GM10248 (cell line): ENCODE measurements at regions of chr7 and their contacts with region 1.

Region 1: GRCh38 chr7:139075031-139075652 is 34.4 kb downstream of the ZC3HAV1 start:
- DNase-seq: peak; percentile 76
- CTCF ChIP-seq: peak; percentile 70

Region 2: DNA sequence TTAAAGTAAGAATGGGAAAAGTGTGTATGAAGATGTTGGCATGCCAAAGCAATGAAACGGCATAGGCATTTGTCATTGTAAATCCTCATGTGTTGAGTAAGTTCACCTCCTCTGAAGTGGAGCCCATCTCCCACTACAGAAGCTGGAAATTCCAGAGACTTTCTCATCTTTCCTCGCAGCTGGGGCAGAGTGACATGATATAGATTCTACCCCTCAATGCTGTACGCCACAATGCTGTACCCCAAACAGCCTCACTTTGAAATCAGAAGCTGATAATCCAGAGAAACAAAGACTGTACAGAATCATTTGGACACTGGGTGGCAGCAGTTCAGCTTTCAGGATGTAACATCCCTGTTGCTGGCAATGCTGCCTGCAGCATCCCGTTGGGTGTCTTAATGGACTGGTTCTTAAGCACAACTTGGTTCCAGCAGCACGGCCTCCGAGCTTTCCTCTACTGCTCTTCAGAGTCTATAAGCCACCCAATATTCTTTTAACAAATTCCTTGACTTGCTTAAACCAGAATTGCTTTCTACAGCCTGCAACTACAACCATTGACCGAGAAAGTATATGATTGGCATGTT is 58.1 kb before region 1 on chr7:
- CTCF ChIA-PET with region 1: interaction called, 44 read pairs
- POLR2A ChIA-PET with region 1: no interaction called
- DNase-seq: peak; percentile 81
- CTCF ChIP-seq: peak; percentile 62

Region 3: DNA sequence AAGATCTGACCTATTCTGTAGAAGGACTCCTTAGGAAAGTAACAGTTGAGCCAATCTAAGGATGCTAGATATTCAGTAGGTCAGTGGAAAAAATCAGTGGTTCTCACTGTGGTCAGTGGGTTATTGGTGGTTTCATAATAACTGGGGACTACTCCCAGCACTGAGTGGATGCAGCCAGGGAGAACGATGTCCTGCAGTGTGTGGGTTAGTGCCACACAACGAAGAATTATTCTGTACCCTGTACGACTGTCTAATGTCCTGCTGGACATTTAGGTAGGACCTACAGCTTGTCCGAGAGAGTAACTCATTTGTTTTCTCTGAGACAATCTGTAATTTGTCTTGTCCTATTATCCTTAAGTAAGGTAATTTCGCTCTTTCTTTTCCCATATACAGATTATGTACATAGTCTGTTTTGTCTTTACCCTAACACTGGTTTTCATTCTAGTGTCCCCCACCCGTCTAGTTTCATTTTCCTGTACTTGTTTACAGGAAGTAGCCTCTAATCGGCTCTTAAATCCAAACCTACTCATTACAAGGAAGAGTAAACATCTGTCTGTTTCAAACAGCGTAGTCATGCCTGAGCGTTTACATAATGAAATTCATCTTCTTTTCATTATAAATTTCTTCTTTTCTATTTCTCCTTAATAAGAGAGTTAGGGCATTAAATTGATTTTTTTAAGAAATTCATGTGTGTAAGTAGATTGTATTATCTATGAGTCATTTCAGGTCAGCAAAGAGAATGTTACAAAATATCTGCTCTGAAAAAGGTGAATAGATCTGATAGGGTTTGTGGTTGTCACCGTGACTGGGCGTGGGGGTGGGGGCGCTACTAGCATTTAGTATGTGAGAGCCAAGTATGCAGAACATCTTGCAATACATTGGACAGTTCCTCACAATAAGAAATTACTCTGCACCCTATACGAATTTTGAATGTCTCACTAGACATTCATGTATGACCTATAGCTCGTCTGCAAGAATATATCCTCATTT is 31.0 kb before region 1 on chr7:
- CTCF ChIA-PET with region 1: interaction called, 17 read pairs
- POLR2A ChIA-PET with region 1: no interaction called
- DNase-seq: no peak
- CTCF ChIP-seq: no peak

Region 4: GRCh38 chr7:139058943-139059342 is 16.2 kb before region 1 on chr7:
- CTCF ChIA-PET with region 1: interaction called, 130 read pairs
- POLR2A ChIA-PET with region 1: no interaction called
- DNase-seq: no peak
- CTCF ChIP-seq: no peak

Region 5: GRCh38 chr7:139095194-139095659 is 20.1 kb after region 1 on chr7:
- CTCF ChIA-PET with region 1: interaction called, 20 read pairs
- POLR2A ChIA-PET with region 1: no interaction called
- DNase-seq: peak; percentile 83
- CTCF ChIP-seq: no peak